ENCODE measurements at regions of chr1 and their contacts with region 1.

Region 1: DNA sequence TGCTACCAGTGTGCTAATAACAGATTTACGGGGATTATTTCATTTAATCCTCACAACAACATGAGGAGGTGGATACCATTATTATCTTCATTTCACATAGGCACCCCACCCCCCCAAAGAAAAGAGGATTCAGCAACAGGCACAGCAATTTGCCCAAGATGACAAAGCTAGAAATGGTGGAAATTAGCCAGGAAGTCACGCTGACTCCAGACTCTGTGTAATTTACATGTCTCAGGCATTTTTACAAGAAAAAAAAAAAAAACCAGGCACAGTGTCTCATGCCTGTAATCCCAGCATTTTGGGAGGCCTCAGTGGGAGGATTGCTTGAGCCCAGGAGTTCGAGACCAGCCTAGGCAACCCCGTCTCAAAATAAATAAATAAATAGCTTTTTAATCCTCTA is 37.5 kb upstream of the PRDM2 start:
- DNase-seq: no peak
- H3K4me3 ChIP-seq: no peak overlapping the region
- H3K27ac ChIP-seq: no peak overlapping the region
- H3K27me3 ChIP-seq: no peaks in the 10 kb centered on the region
- CTCF ChIP-seq: no peak

Region 2: DNA sequence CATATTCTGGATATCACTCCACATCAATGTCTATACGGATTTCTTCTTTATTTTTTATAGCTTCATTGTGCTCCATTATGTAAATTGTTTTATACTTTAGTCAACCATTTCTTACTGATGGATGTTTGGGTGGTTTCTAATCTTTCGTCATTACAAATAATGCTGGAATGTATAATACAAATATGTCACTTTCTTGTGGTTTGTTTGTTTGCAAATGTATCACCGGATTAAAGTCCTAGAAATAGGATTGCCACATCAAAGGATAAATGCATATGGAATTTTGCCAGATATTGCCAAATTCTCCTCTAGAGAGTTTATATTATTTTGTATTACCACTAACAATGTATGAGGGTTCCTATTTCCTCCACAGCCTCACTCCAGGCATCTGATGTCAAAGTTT is 11.2 kb before region 1 on chr1:
- CTCF ChIA-PET with region 1: interaction called, 13 read pairs
- POLR2A ChIA-PET with region 1: no interaction called
- DNase-seq: no peak
- H3K4me3 ChIP-seq: no peak overlapping the region
- H3K27ac ChIP-seq: no peak overlapping the region
- H3K27me3 ChIP-seq: no peaks in the 10 kb centered on the region
- CTCF ChIP-seq: no peak

Region 3: DNA sequence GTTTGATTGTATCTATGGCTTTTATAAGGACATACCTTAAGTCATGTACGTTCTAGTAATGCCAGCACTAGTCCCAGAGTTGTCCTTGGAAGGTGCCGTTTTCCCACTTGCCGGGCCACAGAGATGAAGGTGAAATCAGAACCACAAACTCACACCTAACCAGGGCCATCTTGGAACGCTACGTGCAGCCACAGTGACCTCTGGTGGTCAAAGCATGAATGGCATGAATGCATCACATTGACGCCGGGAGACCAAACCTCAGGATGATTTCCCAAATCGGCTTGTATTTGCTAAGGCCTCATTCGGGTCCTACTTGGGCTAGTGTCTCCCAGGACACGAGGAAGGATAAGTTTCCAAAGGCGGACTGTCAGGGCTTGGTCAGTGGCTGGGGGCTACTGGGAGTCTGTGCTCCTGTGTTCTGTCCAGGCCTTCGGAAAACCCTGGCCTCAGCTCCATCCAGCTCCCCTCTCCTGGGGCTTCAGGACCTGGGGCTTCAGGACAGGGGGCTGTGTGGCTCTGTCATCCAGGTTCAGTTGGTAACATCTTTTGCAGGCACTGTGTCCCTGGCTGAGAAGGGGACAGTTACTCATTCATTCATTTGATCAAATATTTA is 298.0 kb after region 1 on chr1:
- CTCF ChIA-PET with region 1: interaction called, 15 read pairs
- POLR2A ChIA-PET with region 1: no interaction called
- DNase-seq: no peak
- H3K4me3 ChIP-seq: no peak overlapping the region
- H3K27ac ChIP-seq: no peak overlapping the region
- H3K27me3 ChIP-seq: no peaks in the 10 kb centered on the region
- CTCF ChIP-seq: peak; percentile 97